Activated T-helper 2 cell treated with anti-CD3 and anti-CD28 coated beads, Interferon-gamma antibody, Interleukin-2, Interleukin-4, amounts not matched to agents 10 μg/mL and 5 μg/mL and 100 μg/mL, durations not matched to agents 14 hours and 24 hours and 36 hours (primary cell): ENCODE measurements at regions of chr14 and their contacts with region 1.

Region 1: GRCh38 chr14:52895000-52895399 is 55.9 kb downstream of the FERMT2 start:
- DNase-seq: no peak
- H3K4me3 Mint-ChIP-seq: no peak overlapping the region
- H3K27ac Mint-ChIP-seq: no peak overlapping the region
- H3K4me1 Mint-ChIP-seq: peaks cover 12% of the 10 kb centered on the region
- H3K27me3 Mint-ChIP-seq: peaks cover 3% of the 10 kb centered on the region

Region 2: DNA sequence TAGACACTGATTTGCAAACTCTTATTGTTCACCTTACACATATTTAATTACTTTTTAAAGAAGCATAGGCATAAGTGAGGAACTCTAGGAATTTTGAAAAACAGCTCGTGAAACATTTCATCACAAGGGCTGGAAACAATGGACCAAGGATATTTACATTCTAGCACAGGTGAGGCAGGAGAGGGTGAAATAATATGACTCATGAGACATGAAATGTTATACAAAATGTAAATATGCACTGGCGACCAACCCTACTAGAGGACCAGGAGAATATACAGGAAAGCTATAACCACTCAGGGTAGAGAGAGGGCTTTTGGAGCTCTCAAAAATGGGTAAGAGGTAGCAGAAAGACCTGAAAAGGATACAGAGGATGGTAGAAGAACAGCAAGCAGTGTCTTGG is 465.5 kb before region 1 on chr14:
- intact Hi-C with region 1: no loop called
- DNase-seq: no peak
- H3K4me3 Mint-ChIP-seq: no peak overlapping the region
- H3K27ac Mint-ChIP-seq: no peak overlapping the region
- H3K4me1 Mint-ChIP-seq: peaks cover 14% of the 10 kb centered on the region
- H3K27me3 Mint-ChIP-seq: no peaks in the 10 kb centered on the region

Region 3: DNA sequence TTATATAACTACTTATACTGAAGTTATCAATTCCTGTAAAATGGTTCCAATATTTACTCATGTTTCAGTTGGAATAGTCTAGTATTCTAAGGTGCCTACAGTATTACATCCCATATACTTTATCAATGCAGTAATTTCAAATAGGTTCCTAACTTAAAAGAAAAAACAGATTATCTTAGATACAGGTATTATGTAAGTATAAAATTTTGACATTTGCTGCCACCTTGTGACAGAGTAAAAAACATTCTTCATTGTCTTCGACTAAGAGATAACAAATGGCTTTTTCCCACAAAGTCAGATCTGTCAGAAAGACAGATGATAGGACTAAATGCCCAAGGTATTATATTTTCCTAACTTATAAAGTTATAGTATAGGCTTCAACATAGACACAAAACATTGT is 421.4 kb before region 1 on chr14:
- intact Hi-C with region 1: no loop called
- DNase-seq: no peak
- H3K4me3 Mint-ChIP-seq: no peak overlapping the region
- H3K27ac Mint-ChIP-seq: no peak overlapping the region
- H3K4me1 Mint-ChIP-seq: peaks cover 26% of the 10 kb centered on the region
- H3K27me3 Mint-ChIP-seq: no peaks in the 10 kb centered on the region

Region 4: GRCh38 chr14:52918486-52918885 is 23.5 kb after region 1 on chr14:
- intact Hi-C with region 1: loop called (anchors 1 kb)
- DNase-seq: peak; percentile 19
- H3K4me3 Mint-ChIP-seq: no peak overlapping the region
- H3K27ac Mint-ChIP-seq: peak overlapping the region; percentile 30
- H3K4me1 Mint-ChIP-seq: peaks cover 8% of the 10 kb centered on the region
- H3K27me3 Mint-ChIP-seq: peaks cover 2% of the 10 kb centered on the region

Region 5: GRCh38 chr14:53044486-53044885 is 149.5 kb after region 1 on chr14:
- intact Hi-C with region 1: no loop called
- DNase-seq: no peak
- H3K4me3 Mint-ChIP-seq: no peak overlapping the region
- H3K27ac Mint-ChIP-seq: no peak overlapping the region
- H3K4me1 Mint-ChIP-seq: peaks cover 4% of the 10 kb centered on the region
- H3K27me3 Mint-ChIP-seq: no peaks in the 10 kb centered on the region